Left ventricle myocardium inferior (tissue), 1 donor: ENCODE measurements at regions of chr14 and their contacts with region 1.

Region 1: GRCh38 chr14:80850197-80850814 is 91.2 kb downstream of the CEP128 start:
- DNase-seq: no peak
- H3K4me3 ChIP-seq: no peak overlapping the region
- H3K27ac ChIP-seq: no peak overlapping the region
- H3K4me1 ChIP-seq: no peaks in the 10 kb centered on the region
- H3K27me3 ChIP-seq: no peaks in the 10 kb centered on the region
- CTCF ChIP-seq: peak; percentile 68

Region 2: DNA sequence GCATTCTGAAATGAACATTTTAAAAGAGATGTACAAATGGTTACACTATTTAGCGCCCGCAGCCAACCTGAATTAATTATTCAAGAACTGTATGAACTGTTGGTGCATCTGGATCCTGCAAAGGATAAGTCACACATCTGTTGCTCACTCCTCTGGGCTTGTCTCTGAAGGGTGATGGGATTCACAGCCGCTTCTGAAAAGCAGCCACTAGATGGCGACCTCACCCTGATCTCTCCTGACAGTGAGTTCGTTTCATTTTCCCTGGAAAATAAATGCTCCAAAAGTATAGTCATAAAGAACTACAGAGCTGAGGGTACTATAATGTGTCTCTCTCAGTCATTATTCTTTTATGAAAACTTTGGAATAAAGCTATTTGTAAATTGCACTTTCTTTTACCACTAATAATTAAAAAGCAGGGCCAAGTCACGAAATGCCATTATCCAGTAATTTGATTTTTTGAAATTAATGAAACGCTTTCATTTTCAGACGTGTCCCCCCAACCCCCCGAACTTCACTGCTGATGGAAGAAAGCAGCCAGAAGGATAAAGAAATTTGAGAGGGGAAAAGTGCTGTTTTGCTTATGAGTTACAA is 1890.5 kb before region 1 on chr14:
- intact Hi-C with region 1: loop called (anchors 10 kb)
- DNase-seq: peak; percentile 51
- H3K4me3 ChIP-seq: peak overlapping the region; percentile 46
- H3K27ac ChIP-seq: no peak overlapping the region
- H3K4me1 ChIP-seq: no peaks in the 10 kb centered on the region
- H3K27me3 ChIP-seq: peaks cover 23% of the 10 kb centered on the region
- CTCF ChIP-seq: peak; percentile 92

Region 3: GRCh38 chr14:80055667-80056496 is 794.4 kb before region 1 on chr14:
- intact Hi-C with region 1: loop called (anchors 10 kb)
- DNase-seq: no peak
- H3K4me3 ChIP-seq: no peak overlapping the region
- H3K27ac ChIP-seq: no peak overlapping the region
- H3K4me1 ChIP-seq: no peaks in the 10 kb centered on the region
- H3K27me3 ChIP-seq: no peaks in the 10 kb centered on the region
- CTCF ChIP-seq: peak; percentile 73

Region 4: DNA sequence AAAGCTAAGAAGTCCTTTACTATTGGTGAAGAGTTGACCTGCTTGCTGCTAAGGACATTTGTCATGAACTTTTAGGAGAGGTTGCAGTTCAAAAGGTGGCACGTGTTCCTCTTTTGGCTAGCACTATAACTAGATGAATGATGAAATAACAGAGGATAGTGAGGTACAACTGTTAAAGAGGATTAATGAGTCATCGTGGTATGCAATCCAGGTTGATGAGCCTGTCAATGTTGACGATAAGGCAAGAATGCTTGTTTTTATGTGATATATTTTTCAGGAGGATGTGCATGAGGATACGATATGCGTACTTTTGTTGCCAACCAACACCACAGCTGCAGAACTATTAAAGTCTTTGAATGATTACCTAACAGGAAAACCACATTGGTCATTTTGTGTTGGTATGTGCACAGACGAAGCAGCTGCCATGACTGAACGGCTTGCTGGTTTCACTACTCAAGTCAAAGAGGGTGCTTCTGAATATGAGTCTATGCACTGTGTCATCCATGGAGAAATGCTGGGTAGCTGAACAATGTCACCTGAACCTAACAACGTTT is 80.6 kb after region 1 on chr14:
- intact Hi-C with region 1: no loop called
- DNase-seq: no peak
- H3K4me3 ChIP-seq: no peak overlapping the region
- H3K27ac ChIP-seq: no peak overlapping the region
- H3K4me1 ChIP-seq: peaks cover 7% of the 10 kb centered on the region
- H3K27me3 ChIP-seq: no peaks in the 10 kb centered on the region
- CTCF ChIP-seq: no peak